Ovary (tissue), 10 donors: ENCODE measurements at regions of chr5 and their contacts with region 1.

Region 1: DNA sequence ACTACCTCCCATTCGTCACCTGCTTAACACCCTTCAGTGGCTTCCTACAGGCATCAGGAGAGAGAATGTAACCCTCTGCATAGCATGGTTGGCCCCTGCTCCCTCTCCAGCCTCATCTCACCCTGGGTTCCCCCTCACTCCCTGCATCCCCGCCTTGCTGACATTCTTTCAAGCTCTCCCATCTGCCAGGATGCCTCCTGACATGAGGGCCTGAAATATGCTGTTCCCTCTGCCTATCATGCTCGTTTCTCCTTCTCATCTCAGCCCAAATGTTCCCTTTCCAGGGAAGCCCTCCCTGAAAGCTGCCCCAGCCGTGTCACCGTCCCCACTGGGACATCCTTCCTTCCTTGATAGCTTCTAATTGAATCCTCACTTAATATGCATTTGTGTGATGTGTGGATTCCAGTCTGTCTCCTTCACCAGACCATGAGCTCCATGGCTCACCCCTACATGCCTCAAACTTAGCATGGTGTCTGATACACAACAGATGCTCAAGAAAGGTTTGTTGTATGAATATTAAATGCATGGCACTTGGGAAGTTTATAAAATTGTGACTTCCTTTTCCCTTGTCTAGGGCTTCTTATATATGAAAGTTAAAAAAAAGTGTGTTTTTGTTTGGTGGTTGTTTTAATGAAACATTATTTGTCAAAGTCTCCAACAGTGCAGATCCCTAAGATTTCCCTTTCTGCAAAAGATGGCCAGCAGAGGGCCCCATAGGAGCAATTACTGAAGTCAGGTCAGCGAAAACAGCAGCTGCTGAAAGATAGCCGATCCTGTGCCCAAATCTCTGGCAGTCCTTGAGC is 7.3 kb upstream of the C5orf58 start:
- DNase-seq: peak; percentile 72 to 85 (median 76)
- H3K4me3 ChIP-seq: no peak overlapping the region
- H3K27ac ChIP-seq: no peak overlapping the region
- H3K4me1 ChIP-seq: peaks cover 7% of the 10 kb centered on the region
- H3K27me3 ChIP-seq: no peaks in the 10 kb centered on the region
- CTCF ChIP-seq: peak; percentile 36 to 81 (median 76)
- EP300 ChIP-seq: no peak
- POLR2A ChIP-seq: no peak

Region 2: DNA sequence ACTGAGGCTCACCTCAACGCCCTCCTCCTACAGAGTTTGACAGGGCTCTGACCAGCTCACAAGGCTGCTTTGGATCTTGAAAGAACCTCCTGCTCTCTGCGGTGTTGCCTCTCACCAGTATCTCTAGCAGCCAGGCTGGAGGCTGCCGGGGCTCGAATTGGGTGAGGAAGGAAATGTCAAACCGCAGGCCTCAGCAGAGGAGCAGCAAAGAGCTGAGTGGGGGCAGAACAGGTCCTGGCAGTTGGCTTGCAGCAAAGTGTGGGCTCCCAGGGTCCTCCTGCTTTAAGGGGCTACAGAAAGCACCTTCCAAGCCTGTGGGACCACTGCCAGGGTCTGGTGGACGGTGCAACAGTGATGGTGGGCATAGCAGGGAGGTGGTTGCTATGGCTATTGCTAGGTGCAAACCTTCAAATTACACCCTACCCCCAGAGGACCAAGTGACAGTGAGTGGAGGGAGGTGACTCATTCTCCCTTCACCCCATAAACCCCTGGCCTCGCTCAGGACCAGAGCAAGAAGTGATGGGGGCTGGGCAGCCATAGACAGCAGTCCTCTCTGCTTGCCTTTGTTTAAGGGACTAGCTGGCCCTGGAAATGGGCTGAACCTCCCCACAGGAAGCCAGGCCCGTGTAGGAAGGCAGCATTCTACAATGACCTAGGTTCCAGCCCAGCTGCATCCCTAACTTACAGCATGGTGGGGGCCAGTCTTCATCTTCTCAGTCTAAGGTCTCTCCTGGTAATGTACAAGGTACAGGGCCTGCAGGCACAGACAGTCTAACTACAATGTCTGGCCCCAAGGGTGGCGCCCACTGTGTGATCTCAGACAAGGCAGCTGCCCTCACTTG is 53.3 kb after region 1 on chr5:
- intact Hi-C with region 1: no loop called
- DNase-seq: no peak
- H3K4me3 ChIP-seq: no peak overlapping the region
- H3K27ac ChIP-seq: no peak overlapping the region
- H3K4me1 ChIP-seq: peaks cover 4% of the 10 kb centered on the region
- H3K27me3 ChIP-seq: no peaks in the 10 kb centered on the region
- CTCF ChIP-seq: no peak
- EP300 ChIP-seq: no peak
- POLR2A ChIP-seq: no peak

Region 3: DNA sequence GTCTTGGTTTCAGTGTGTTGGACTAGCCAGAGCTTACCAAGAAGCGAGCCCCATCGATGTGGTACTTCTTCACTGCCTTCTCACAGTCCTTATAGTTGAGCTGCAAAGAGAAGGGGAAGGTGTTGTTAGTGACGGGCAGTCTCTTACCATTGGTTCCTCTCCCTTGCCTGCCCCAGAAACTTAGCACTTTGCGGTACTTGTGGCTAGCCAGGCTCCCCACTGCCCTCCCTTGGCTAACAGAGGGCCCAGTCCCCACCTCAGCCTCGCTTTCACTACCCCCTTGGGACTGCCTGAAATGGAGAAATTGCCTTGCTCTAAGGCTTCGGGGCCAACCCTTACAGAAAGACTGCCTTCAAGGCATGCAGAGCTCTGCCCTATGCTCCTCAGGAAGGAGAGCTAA is 67.7 kb after region 1 on chr5:
- intact Hi-C with region 1: no loop called
- DNase-seq: no peak
- H3K4me3 ChIP-seq: no peak overlapping the region
- H3K27ac ChIP-seq: no peak overlapping the region
- H3K4me1 ChIP-seq: peaks cover 6% of the 10 kb centered on the region
- H3K27me3 ChIP-seq: no peaks in the 10 kb centered on the region
- CTCF ChIP-seq: no peak
- EP300 ChIP-seq: no peak
- POLR2A ChIP-seq: no peak

Region 4: GRCh38 chr5:170348137-170348633 is 122.7 kb after region 1 on chr5:
- intact Hi-C with region 1: loop called in 2 of 4 experiments (anchors 2 to 5 kb)
- DNase-seq: no peak
- H3K4me3 ChIP-seq: no peak overlapping the region
- H3K27ac ChIP-seq: no peak overlapping the region
- H3K4me1 ChIP-seq: peaks cover 4% of the 10 kb centered on the region
- H3K27me3 ChIP-seq: no peaks in the 10 kb centered on the region
- CTCF ChIP-seq: peak in 2 of 3 donors; percentile 51 to 62
- EP300 ChIP-seq: no peak
- POLR2A ChIP-seq: no peak

Region 5: DNA sequence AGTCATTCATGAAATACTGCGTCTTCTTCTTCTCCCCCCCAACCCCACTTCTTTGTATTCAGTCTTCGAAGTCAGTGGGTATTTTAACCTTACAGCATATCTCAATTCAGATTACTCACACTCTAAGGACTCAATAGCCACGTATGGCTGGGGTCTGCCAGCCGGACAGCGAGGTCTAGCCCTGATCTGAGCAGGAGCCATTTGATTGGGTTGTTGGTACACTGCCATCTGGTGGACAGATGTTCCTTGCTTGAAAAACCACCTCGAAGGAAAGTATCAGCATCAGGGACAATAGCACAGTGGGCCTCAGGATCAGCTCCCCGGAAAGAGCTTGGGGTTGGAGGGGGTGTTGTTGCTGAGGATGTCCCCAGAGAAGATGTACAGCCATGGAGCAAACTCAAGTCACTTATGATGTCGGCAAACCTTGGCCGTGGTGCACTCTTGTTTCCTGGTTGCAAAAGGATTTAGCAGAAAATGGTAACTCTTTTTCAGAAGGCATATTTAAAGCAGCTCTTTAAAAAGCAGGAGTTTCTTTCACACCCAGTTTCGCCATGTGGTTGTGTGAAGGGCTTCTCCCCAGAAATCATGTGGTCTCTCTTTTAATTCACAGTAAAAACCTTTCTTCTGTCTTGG is 195.4 kb after region 1 on chr5:
- intact Hi-C with region 1: loop called in 2 of 4 experiments (anchors 5 kb)
- DNase-seq: peak; percentile 40 to 63 (median 51)
- H3K4me3 ChIP-seq: no peak overlapping the region
- H3K27ac ChIP-seq: no peak overlapping the region
- H3K4me1 ChIP-seq: no peaks in the 10 kb centered on the region
- H3K27me3 ChIP-seq: no peaks in the 10 kb centered on the region
- CTCF ChIP-seq: peak; percentile 28 to 65 (median 60)
- EP300 ChIP-seq: no peak
- POLR2A ChIP-seq: no peak